GM13976 (cell line): ENCODE measurements at regions of chr17 and their contacts with region 1.

Region 1: DNA sequence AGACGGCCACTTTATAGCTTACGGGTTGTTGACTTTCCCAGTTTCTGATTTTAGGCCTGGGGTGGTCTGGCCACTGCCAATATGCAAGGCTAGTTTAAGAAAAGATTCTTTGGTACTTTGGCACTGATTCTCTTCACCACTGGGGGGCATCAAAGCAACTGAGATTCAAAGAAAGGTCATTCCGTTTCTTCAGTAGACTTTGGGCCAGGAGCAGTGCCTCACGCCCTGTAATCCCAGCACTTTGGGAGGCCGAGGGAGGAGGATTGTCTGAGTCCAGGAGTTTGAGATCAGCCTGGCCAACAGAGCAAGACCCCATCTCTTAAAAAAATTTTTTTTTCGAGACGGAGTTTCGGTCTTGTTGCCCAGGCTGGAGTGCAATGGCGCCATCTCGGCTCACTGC is 53.0 kb downstream of the RPA1 start:
- DNase-seq: peak; percentile 61
- CTCF ChIP-seq: peak; percentile 33

Region 2: GRCh38 chr17:1617620-1618174 is 265.1 kb before region 1 on chr17:
- in situ Hi-C with region 1: no loop called
- DNase-seq: no peak
- CTCF ChIP-seq: no peak

Region 3: DNA sequence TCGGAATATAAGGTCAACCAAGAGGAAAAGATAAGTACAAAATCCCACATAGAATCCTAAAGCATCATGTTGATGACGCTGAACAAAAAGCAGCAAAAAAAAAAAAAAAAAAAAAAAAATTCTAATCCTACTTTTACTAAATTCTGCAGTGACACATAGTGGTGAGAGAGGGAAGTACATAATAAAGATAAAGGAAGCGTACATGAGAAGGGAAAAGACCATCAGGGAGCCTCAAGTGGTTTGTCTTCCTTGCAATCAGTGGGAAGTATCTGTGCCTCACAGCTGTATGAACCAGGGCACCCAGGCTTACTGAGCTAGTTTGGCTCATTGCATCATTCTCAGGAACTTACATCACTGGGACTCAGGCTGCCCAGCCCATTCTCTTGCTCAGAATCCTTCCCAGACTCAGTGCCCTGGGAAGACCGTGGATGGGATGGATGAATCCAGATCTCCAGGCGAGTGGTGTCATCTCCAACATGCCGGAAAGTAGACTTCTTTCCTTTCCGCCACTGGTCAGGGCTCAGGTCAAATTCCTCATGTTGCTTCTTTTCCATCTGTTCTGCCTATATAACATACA is 399.5 kb after region 1 on chr17:
- in situ Hi-C with region 1: loop called (anchors 25 kb)
- DNase-seq: peak; percentile 62
- CTCF ChIP-seq: peak; percentile 42